CD14-positive monocyte (primary cell): ENCODE measurements at regions of chr2 and their contacts with region 1.

Region 1: DNA sequence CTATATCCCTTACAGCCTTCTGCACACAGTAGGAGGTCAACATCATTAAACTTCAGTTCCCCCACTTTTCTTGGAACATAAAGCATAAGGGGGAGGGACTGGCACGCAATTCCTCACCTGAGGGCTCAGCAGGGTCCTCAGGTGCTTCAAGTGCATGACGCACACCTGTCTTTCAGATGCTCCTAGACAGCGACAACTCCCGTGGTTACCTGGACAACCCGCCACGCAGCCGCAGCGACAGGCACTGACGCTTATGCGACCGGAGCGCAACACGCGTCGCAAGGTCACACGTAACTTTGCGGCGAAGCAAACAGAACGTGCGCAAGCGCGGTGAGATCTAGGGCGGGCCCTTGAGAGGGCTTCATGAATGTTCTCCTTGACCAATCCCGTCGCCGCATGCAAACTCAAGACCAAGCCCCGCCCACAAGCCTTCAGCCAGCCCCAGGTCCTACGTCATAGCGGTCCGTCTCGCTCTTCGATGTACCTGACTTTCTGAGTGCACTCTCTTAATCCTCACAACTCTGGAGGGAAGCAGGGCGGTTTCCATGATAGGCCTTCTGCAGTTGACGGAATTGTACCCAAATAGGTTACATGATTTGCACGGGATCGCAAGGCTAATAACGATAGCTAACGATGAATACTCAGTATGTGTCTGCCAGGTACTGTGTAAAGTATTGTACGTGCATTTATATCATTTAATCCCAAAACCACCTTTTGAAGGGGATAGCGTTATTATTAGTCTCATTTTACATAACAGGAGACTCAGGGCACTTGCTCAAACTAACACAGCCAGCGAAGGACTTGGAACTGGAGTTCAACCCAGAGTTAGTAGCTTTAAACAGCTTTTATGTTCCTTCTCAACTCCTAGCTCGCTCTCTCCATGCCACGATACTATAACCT is at the start of gene IFT172:
- DNase-seq: peak; percentile 98 to 99 (median 99)
- H3K4me3 ChIP-seq: peak within 1 kb of the TSS; percentile 52 to 80 (median 62)
- H3K4me3 Mint-ChIP-seq: peak within 1 kb of the TSS; percentile 81 to 92
- H3K27ac ChIP-seq: peak within 1 kb of the TSS in 1 of 2 donors; percentile 79
- H3K27ac Mint-ChIP-seq: peak within 1 kb of the TSS; percentile 77 to 93 (median 88)
- H3K4me1 ChIP-seq: peaks cover 16 to 22% of the 10 kb centered on the region in 2 donors
- H3K4me1 Mint-ChIP-seq: peaks cover 22% of the 10 kb centered on the region
- H3K27me3 ChIP-seq: peaks cover 14 to 16% of the 10 kb centered on the region in 2 donors
- H3K27me3 Mint-ChIP-seq: peaks cover 23 to 25% (median 24%) of the 10 kb centered on the region in 3 donors
- CTCF ChIP-seq: no peak
- polyA plus RNA-seq, gene IFT172: 1.7 to 12.8 (median 3.6) TPM

Region 2: DNA sequence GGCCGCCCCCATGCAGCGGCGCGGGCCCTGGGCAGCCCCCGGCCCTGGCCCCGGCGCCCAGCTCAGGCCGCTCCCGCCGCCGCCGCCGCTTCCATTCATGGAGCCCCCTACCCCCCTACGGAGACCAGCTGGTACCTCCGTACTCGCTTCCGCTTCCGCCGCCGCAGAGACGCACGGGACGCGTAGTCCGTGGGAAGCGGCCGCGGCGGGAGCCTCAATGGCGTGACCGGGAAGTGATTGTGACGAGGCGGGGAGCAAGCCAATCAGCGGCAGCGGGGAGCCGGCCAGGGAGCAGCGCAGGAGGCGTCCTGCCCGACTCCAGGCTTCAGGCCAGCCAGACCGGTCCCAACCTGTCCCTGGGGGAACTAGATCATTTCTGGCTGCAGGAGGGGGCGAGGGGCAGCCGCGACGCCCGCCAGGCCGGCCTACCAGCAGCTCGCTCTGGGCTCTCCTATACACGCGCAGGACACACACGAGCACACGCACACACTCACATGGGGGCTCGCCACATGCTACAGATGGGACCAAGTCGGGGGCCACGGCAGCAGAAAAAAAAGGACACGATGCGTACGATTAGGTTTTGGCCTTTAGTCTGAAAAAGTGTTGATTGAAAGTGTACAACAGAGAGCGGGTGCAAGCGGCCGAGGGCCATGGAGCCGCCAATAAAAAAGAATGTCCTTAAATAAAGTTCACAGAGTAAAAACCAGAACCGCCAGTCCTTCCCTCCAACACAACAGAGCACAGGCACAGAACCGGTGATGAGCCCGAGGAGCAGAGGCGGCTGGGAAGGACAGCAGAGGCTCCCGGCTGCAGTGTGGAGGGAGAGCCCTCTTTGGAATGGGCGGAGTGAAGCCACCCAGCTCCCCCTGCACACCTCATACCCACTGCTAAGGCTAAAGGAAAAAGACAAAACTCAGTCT is 108.9 kb before region 1 on chr2 and contains the start of gene ZNF513:
- intact Hi-C with region 1: loop called (anchors 10 kb)
- DNase-seq: peak; percentile 94 to 95 (median 94)
- H3K4me3 ChIP-seq: peak within 1 kb of the TSS; percentile 67 to 78 (median 68)
- H3K4me3 Mint-ChIP-seq: peak within 1 kb of the TSS; percentile 86 to 91
- H3K27ac ChIP-seq: peak within 1 kb of the TSS; percentile 79 to 96
- H3K27ac Mint-ChIP-seq: peak within 1 kb of the TSS; percentile 93 to 98 (median 96)
- H3K4me1 ChIP-seq: peaks cover 18 to 38% of the 10 kb centered on the region in 2 donors
- H3K4me1 Mint-ChIP-seq: peaks cover 29% of the 10 kb centered on the region
- H3K27me3 ChIP-seq: no peaks in the 10 kb centered on the region
- H3K27me3 Mint-ChIP-seq: peaks cover 0 to 3% (median 1%) of the 10 kb centered on the region in 3 donors
- CTCF ChIP-seq: no peak
- polyA plus RNA-seq, gene ZNF513: 2.4 to 36.8 (median 2.6) TPM

Region 3: GRCh38 chr2:27453967-27454366 is 35.8 kb before region 1 on chr2:
- intact Hi-C with region 1: no loop called
- DNase-seq: no peak
- H3K4me3 ChIP-seq: no peak overlapping the region
- H3K4me3 Mint-ChIP-seq: no peak overlapping the region
- H3K27ac ChIP-seq: no peak overlapping the region
- H3K27ac Mint-ChIP-seq: peak overlapping the region in 2 of 7 donors; percentile 21 to 32
- H3K4me1 ChIP-seq: no peaks in the 10 kb centered on the region
- H3K4me1 Mint-ChIP-seq: no peaks in the 10 kb centered on the region
- H3K27me3 ChIP-seq: no peaks in the 10 kb centered on the region
- H3K27me3 Mint-ChIP-seq: peaks cover 0 to 2% (median 0%) of the 10 kb centered on the region in 3 donors
- CTCF ChIP-seq: no peak

Region 4: GRCh38 chr2:27582695-27583389 is 93.1 kb after region 1 on chr2 and contains the start of gene ZNF512:
- intact Hi-C with region 1: loop called in 1 of 2 experiments (anchors 10 kb)
- DNase-seq: peak; percentile 94 to 96 (median 95)
- H3K4me3 ChIP-seq: peak within 1 kb of the TSS; percentile 66 to 98 (median 87)
- H3K4me3 Mint-ChIP-seq: peak within 1 kb of the TSS; percentile 91 to 95
- H3K27ac ChIP-seq: peak within 1 kb of the TSS; percentile 72 to 91
- H3K27ac Mint-ChIP-seq: peak within 1 kb of the TSS; percentile 90 to 99 (median 96)
- H3K4me1 ChIP-seq: peaks cover 24 to 25% of the 10 kb centered on the region in 2 donors
- H3K4me1 Mint-ChIP-seq: peaks cover 34% of the 10 kb centered on the region
- H3K27me3 ChIP-seq: no peaks in the 10 kb centered on the region
- H3K27me3 Mint-ChIP-seq: peaks cover 0 to 2% (median 2%) of the 10 kb centered on the region in 3 donors
- CTCF ChIP-seq: no peak
- polyA plus RNA-seq, gene ZNF512: 6.7 to 13.1 (median 12.8) TPM

Region 5: DNA sequence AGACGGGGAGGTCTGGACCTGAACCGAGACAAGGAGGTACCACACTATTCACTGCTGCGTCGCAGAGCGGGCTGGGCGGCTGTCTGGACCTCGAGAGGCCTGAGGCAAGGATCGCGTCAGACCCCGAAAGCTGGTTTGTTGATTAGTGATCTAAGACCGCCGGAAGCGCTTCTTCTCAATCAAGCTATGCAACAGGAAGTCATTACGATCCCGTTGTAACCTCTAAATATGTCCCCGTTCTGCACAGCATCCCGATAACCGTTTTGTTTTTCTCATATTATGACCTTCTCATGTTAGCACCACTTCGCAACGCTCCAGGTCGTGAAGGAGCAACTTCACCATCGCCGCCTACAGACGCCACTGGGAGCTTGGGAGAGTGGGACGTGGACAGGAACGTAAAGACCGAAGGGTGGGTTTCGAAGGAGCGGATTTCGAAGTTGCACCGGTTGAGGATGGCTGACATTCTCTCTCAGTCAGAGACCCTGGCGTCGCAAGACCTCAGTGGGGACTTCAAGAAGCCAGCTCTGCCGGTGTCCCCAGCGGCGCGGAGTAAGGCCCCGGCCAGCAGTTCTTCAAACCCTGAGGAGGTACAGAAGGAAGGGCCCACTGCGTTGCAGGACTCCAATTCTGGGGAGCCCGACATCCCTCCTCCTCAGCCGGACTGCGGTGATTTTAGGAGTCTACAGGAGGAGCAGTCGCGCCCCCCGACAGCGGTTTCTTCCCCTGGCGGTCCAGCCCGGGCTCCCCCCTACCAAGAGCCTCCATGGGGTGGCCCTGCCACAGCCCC is 173.9 kb after region 1 on chr2 and contains the starts of genes SLC4A1AP and SUPT7L:
- intact Hi-C with region 1: loop called in 1 of 2 experiments (anchors 2 kb)
- DNase-seq: peak; percentile 77 to 82 (median 79)
- H3K4me3 ChIP-seq: peak within 1 kb of the TSS; percentile 72 to 83 (median 82)
- H3K4me3 Mint-ChIP-seq: peak within 1 kb of the TSS; percentile 91 to 100
- H3K27ac ChIP-seq: peak within 1 kb of the TSS; percentile 80 to 95
- H3K27ac Mint-ChIP-seq: peak within 1 kb of the TSS; percentile 98 to 100 (median 99)
- H3K4me1 ChIP-seq: peaks cover 32 to 36% of the 10 kb centered on the region in 2 donors
- H3K4me1 Mint-ChIP-seq: peaks cover 32% of the 10 kb centered on the region
- H3K27me3 ChIP-seq: no peaks in the 10 kb centered on the region
- H3K27me3 Mint-ChIP-seq: no peaks in the 10 kb centered on the region
- CTCF ChIP-seq: no peak
- polyA plus RNA-seq, gene SLC4A1AP: 12.7 to 24.9 (median 18.3) TPM
- polyA plus RNA-seq, gene SUPT7L: 10.7 to 59.0 (median 12.2) TPM